ENCODE measurements at regions of chr9 and their contacts with region 1.

Region 1: GRCh38 chr9:109166771-109167601 is at the start of gene FRRS1L:
- DNase-seq: no peak
- ATAC-seq: peak; percentile 63
- H3K4me3 ChIP-seq: peak within 1 kb of the TSS; percentile 20
- H3K27ac ChIP-seq: no peak within 1 kb of the TSS
- H3K4me1 ChIP-seq: no peaks in the 10 kb centered on the region
- H3K27me3 ChIP-seq: peaks cover 46% of the 10 kb centered on the region
- CTCF ChIP-seq: no peak
- POLR2A ChIP-seq: no peak
- RAD21 ChIP-seq: no peak
- total RNA-seq, gene FRRS1L: under 0.01 TPM in 1 of 2 replicates, not detected in the other

Region 2: DNA sequence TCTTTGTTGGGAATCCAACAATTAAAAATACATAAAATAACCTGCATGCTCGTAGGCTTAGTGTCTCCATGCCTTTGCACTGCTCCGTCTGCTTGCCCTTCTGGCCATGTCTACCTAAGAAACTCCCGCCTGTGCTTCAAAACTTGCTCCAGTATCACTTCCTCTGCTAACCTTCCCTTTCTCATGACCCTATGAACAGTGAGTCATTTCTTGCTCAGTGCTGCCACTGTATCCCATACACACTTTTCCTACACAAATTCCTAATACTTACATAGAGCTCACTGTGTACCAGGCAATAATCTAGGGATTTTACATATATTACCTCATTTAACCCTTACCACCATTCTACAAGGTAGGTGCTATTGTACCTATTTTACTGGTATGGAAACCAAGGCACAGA is 80.7 kb before region 1 on chr9:
- CTCF ChIA-PET with region 1: no interaction called
- POLR2A ChIA-PET with region 1: no interaction called
- dilution Hi-C with region 1: no loop called
- in situ Hi-C with region 1: no loop called
- intact Hi-C with region 1: no loop called
- DNase-seq: peak; percentile 68
- ATAC-seq: peak; percentile 37; the same call in 1 of the 2 replicates
- H3K4me3 ChIP-seq: no peak overlapping the region
- H3K27ac ChIP-seq: no peak overlapping the region
- H3K4me1 ChIP-seq: no peaks in the 10 kb centered on the region; the same call in 1 of the 2 replicates
- H3K27me3 ChIP-seq: no peaks in the 10 kb centered on the region
- CTCF ChIP-seq: no peak
- POLR2A ChIP-seq: no peak
- RAD21 ChIP-seq: no peak

Region 3: GRCh38 chr9:109101810-109102209 is 65.2 kb before region 1 on chr9:
- CTCF ChIA-PET with region 1: no interaction called
- POLR2A ChIA-PET with region 1: no interaction called
- dilution Hi-C with region 1: no loop called
- in situ Hi-C with region 1: loop called (anchors 10 kb)
- intact Hi-C with region 1: no loop called
- DNase-seq: peak; percentile 84
- ATAC-seq: peak; percentile 12; the same call in 1 of the 2 replicates
- H3K4me3 ChIP-seq: no peak overlapping the region
- H3K27ac ChIP-seq: no peak overlapping the region
- H3K4me1 ChIP-seq: peaks cover 16% of the 10 kb centered on the region
- H3K27me3 ChIP-seq: no peaks in the 10 kb centered on the region
- CTCF ChIP-seq: no peak
- POLR2A ChIP-seq: no peak
- RAD21 ChIP-seq: no peak

Region 4: DNA sequence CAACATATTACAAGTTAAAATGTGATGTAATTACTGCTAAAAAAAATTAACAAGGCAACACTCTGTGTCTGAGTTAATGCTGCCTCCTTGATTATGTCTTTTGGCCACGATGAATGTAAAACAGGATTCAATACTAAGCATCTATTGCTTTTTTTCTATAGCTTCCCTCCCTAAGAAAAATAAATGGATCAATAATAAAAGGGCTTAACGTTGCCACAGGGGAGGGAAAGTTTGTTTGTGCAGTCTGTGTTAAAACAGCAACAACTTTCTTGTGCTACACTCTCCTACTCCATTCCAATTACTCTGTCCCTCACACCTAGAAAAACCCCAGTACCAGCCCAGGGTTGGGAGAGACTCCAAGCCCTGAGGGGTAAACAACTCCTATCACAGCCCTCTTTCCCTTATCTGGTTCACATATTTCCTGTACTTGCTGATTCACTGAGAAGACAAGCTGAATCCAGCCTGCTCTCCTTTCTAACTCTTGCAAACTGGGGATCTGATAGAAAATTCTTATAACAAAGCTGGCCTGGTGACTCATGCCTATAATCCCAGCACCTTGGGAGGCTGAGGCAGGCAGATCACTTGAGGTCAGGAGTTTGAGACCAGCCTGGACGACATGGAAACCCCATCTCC is 286.3 kb after region 1 on chr9:
- CTCF ChIA-PET with region 1: no interaction called
- POLR2A ChIA-PET with region 1: no interaction called
- dilution Hi-C with region 1: no loop called
- in situ Hi-C with region 1: no loop called
- intact Hi-C with region 1: no loop called
- DNase-seq: peak; percentile 81
- ATAC-seq: peak; percentile 81
- H3K4me3 ChIP-seq: no peak overlapping the region
- H3K27ac ChIP-seq: no peak overlapping the region
- H3K4me1 ChIP-seq: peaks cover 2% of the 10 kb centered on the region; the same call in 1 of the 2 replicates
- H3K27me3 ChIP-seq: no peaks in the 10 kb centered on the region; the same call in 1 of the 2 replicates
- CTCF ChIP-seq: no peak
- POLR2A ChIP-seq: no peak
- RAD21 ChIP-seq: no peak

Measured in IMR-90 (cell line).